ENCODE measurements at regions of chr16 and their contacts with region 1.

Region 1: DNA sequence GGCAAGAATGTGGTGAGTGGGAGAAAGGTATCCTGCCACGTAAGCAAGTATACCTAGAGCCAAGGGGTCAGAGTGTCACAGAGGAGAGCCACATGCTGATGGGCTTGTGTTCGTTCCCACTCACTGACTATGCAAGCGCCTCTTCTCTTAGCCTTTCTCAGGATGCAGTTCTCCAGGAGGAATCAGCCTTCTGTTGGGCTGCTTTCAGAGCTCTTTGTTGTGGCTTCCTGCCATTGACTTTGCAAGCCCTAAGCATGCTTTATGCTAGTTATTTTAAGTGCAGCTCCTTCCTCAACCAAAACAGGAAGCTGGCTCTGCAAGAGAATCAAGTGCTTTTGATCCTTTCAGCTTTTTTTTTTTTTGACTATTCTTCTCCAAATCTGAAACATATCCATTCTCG is 66.6 kb downstream of the SIAH1 start:
- DNase-seq: no peak
- H3K4me3 ChIP-seq: no peak overlapping the region
- H3K27ac ChIP-seq: no peak overlapping the region
- H3K4me1 ChIP-seq: 0 out of 2 replicates have a peak, but pooled peaks cover 4% of the 10 kb centered on the region
- H3K27me3 ChIP-seq: no peaks in the 10 kb centered on the region
- CTCF ChIP-seq: no peak

Region 2: DNA sequence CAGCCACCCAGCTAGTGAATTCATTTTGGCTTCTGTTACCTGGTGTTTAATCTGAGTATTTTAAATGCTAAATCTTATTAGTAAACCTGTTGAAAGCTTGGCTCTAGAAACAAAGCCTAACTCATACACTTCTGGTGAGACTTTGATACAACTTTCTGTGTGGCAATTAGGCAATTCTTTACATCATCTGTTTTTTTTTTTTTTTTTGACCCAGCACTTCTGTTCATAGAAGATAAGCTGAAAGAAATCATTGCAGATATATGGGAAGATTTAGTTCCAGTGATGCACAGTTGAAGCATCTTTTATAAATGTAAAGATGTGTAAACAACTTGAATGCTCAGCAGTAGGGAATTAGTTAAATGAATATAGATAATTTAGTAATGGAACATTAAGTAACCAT is 49.6 kb before region 1 on chr16:
- CTCF ChIA-PET with region 1: no interaction called
- POLR2A ChIA-PET with region 1: no interaction called
- intact Hi-C with region 1: loop called (anchors 10 kb)
- DNase-seq: no peak
- H3K4me3 ChIP-seq: no peak overlapping the region
- H3K27ac ChIP-seq: no peak overlapping the region; the same call in 1 of the 2 replicates
- H3K4me1 ChIP-seq: no peaks in the 10 kb centered on the region
- H3K27me3 ChIP-seq: no peaks in the 10 kb centered on the region
- CTCF ChIP-seq: no peak

Region 3: GRCh38 chr16:48559462-48560211 is 241.0 kb after region 1 on chr16:
- CTCF ChIA-PET with region 1: no interaction called
- POLR2A ChIA-PET with region 1: interaction called, 16 read pairs
- intact Hi-C with region 1: no loop called
- DNase-seq: no peak
- H3K4me3 ChIP-seq: no peak overlapping the region
- H3K27ac ChIP-seq: no peak overlapping the region
- H3K4me1 ChIP-seq: no peaks in the 10 kb centered on the region
- H3K27me3 ChIP-seq: no peaks in the 10 kb centered on the region
- CTCF ChIP-seq: no peak